Activated CD8-positive, alpha-beta T cell treated with anti-CD3 and anti-CD28 coated beads for 36 hours (primary cell): ENCODE measurements at regions of chr12 and their contacts with region 1.

Region 1: DNA sequence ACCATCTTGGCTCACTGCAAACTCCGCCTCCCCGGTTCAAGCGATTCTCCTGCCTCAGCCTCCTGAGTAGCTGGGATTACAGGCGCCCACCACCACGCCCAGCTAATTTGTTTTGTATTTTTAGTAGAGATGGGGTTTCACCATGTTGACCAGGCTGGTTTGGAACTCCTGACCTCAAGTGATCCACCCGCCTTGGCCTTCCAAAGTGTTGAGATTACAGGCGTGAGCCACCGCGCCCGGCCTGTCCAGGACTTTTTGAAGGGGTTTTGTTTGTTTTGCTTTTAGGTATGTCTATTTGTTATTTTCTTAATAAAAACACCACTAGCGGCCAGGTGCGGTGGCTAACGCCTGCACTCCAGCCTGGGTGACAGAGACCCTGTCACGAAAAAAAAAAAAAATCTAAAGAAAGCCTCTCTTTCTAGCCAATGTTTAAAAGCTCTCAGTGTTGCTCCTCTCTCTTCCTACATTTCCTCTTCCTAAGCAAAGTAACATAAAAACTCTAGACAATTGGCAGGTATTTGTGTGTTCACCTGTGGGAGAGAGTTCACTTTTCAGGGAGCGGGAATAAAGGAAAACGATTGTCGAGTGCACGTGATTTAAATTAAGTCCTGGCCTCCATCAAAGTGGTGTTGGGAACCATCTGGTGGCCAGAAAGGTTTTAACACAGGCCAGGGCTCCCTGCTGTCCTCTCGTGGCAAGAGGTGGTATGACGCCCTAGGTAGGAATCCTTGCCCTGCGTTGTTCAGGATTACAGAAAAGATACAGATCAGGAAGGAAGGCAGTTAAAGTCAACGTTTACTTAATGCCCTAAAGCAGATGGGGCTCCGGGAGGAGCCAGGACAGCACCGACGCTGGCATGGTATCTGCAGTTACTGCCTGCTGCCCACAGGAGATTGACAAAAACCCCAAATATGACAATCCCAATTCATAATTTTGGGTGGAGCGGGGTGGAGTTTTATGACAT is 36.2 kb upstream of the ATP23 start:
- DNase-seq: peak; percentile 91
- ATAC-seq: peak; percentile 100
- H3K4me3 Mint-ChIP-seq: no peak overlapping the region
- H3K27ac Mint-ChIP-seq: peak overlapping the region; percentile 14
- H3K4me1 Mint-ChIP-seq: peaks cover 5% of the 10 kb centered on the region
- H3K27me3 Mint-ChIP-seq: peaks cover 2% of the 10 kb centered on the region
- CTCF ChIP-seq: peak; percentile 100

Region 2: GRCh38 chr12:57759360-57759980 is 145.7 kb before region 1 on chr12:
- CTCF ChIA-PET with region 1: interaction called, 12 read pairs
- POLR2A ChIA-PET with region 1: interaction called, 3 read pairs
- intact Hi-C with region 1: no loop called
- DNase-seq: peak; percentile 58
- ATAC-seq: no peak
- H3K4me3 Mint-ChIP-seq: no peak overlapping the region
- H3K27ac Mint-ChIP-seq: no peak overlapping the region
- H3K4me1 Mint-ChIP-seq: peaks cover 41% of the 10 kb centered on the region
- H3K27me3 Mint-ChIP-seq: no peaks in the 10 kb centered on the region
- CTCF ChIP-seq: peak; percentile 69

Region 3: GRCh38 chr12:57793920-57794319 is 111.2 kb before region 1 on chr12:
- CTCF ChIA-PET with region 1: interaction called, 124 read pairs
- POLR2A ChIA-PET with region 1: no interaction called
- intact Hi-C with region 1: no loop called
- DNase-seq: no peak
- ATAC-seq: no peak
- H3K4me3 Mint-ChIP-seq: no peak overlapping the region
- H3K27ac Mint-ChIP-seq: no peak overlapping the region
- H3K4me1 Mint-ChIP-seq: peaks cover 15% of the 10 kb centered on the region
- H3K27me3 Mint-ChIP-seq: no peaks in the 10 kb centered on the region
- CTCF ChIP-seq: no peak

Region 4: GRCh38 chr12:57815177-57816000 is 89.7 kb before region 1 on chr12:
- CTCF ChIA-PET with region 1: interaction called, 22 read pairs
- POLR2A ChIA-PET with region 1: no interaction called
- intact Hi-C with region 1: no loop called
- DNase-seq: no peak
- ATAC-seq: no peak
- H3K4me3 Mint-ChIP-seq: no peak overlapping the region
- H3K27ac Mint-ChIP-seq: no peak overlapping the region
- H3K4me1 Mint-ChIP-seq: no peaks in the 10 kb centered on the region
- H3K27me3 Mint-ChIP-seq: no peaks in the 10 kb centered on the region
- CTCF ChIP-seq: no peak

Region 5: DNA sequence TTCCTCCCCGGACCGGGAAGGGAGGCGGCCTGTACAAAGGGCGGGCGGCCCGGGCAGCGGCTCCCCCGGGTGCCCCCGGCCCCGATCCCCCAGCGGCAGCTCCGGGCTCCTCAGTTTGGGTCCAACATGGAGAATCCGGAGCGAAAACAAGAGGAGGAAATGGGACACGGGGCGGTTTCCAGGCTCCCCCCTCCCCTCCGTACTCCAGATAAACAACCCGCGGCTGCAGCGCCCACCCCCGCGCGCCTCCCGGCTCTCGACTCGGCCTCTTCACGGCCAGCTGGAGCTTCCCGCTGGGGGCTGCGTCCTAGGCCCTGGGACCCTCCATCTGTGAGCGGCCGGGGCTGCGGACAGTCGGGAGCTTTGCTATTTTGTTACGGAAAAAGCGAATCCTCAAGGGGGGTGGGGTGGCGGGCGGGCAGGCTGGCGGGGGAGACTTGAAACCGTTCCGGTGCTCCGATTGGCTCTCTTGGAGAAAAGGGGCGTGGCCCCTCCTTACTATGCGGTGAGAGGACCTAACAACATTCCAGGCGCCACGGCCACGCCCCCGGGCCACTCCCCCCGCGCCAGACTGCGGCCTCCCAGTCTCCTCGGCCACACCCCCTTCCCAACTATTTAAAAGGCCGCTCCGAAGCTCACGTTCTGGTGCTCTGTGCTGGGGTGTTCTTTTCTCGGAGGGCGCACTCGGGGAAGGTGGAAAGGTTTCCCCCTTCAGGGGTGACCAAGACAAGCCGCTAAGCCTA is 58.4 kb before region 1 on chr12 and contains the start of gene CTDSP2:
- CTCF ChIA-PET with region 1: interaction called, 61 read pairs
- POLR2A ChIA-PET with region 1: interaction called, 70 read pairs
- intact Hi-C with region 1: no loop called
- DNase-seq: peak; percentile 88
- ATAC-seq: peak; percentile 33
- H3K4me3 Mint-ChIP-seq: peak within 1 kb of the TSS; percentile 81
- H3K27ac Mint-ChIP-seq: peak within 1 kb of the TSS; percentile 92
- H3K4me1 Mint-ChIP-seq: peaks cover 49% of the 10 kb centered on the region
- H3K27me3 Mint-ChIP-seq: peaks cover 8% of the 10 kb centered on the region
- CTCF ChIP-seq: no peak
- total RNA-seq, gene CTDSP2: 67.1 to 67.2 TPM

Region 6: DNA sequence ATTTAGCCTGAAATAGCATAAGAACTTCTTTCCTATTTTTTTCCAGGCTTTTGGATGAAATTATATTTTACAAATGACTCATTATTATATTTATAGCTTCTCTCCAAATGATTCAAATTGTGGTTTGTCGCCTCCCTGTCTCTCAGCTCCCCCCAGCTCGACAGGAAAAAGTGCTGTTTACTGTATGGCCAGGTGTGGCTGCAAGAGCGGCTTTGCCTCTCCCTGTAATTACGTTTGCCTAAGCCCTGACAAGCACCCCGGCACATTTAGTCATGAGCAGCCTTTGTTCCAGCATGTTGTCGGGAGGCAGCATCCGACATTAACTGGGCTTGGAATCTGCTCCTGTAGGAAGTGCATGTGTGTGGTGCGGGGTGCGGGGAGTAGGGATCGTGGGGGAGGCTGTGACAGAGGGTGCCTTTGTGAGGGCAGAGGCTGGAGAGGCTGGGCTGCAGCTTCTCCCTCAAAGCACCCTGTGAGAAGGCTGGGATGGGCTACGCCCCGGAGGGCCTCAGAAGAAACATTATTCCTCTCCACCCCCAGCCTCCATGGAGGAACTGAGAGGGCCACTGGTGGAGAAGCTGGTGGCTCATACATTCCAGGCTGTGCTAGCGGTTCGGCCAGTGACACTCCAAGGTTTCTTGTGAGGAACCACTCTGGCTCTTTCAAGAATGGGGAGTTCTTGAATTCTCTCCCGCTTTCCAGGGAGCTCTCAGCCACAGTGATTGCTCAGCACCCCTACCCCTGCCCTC is 16.5 kb before region 1 on chr12:
- CTCF ChIA-PET with region 1: interaction called, 10 read pairs
- POLR2A ChIA-PET with region 1: interaction called, 5 read pairs
- intact Hi-C with region 1: no loop called
- DNase-seq: peak; percentile 59
- ATAC-seq: peak; percentile 84
- H3K4me3 Mint-ChIP-seq: no peak overlapping the region
- H3K27ac Mint-ChIP-seq: no peak overlapping the region
- H3K4me1 Mint-ChIP-seq: peaks cover 9% of the 10 kb centered on the region
- H3K27me3 Mint-ChIP-seq: peaks cover 1% of the 10 kb centered on the region
- CTCF ChIP-seq: no peak

Region 7: DNA sequence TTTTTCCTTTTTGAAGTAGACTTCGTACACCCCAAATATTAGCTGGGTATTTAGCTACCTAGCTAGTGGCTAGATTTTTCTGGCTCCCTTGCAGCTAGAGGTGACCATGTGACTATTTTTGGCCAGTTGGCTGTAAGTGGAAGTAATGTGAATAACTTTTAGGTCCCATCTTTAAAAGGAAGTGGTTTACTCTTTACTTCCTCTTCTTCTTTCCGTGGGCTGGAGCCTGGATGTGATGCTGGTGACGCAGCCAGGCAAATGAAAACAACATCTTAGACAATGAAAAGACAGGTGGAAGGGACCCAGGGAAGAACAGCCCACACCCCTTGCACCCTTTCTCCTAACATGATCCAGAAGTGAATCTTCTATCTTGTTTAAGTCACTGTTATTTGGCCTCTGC is 281.8 kb after region 1 on chr12:
- CTCF ChIA-PET with region 1: no interaction called
- POLR2A ChIA-PET with region 1: no interaction called
- intact Hi-C with region 1: no loop called
- DNase-seq: no peak
- ATAC-seq: no peak
- H3K4me3 Mint-ChIP-seq: no peak overlapping the region
- H3K27ac Mint-ChIP-seq: no peak overlapping the region
- H3K4me1 Mint-ChIP-seq: no peaks in the 10 kb centered on the region
- H3K27me3 Mint-ChIP-seq: peaks cover 2% of the 10 kb centered on the region
- CTCF ChIP-seq: no peak